Motor neuron (in vitro differentiated cells): ENCODE measurements at regions of chr1 and their contacts with region 1.

Region 1: DNA sequence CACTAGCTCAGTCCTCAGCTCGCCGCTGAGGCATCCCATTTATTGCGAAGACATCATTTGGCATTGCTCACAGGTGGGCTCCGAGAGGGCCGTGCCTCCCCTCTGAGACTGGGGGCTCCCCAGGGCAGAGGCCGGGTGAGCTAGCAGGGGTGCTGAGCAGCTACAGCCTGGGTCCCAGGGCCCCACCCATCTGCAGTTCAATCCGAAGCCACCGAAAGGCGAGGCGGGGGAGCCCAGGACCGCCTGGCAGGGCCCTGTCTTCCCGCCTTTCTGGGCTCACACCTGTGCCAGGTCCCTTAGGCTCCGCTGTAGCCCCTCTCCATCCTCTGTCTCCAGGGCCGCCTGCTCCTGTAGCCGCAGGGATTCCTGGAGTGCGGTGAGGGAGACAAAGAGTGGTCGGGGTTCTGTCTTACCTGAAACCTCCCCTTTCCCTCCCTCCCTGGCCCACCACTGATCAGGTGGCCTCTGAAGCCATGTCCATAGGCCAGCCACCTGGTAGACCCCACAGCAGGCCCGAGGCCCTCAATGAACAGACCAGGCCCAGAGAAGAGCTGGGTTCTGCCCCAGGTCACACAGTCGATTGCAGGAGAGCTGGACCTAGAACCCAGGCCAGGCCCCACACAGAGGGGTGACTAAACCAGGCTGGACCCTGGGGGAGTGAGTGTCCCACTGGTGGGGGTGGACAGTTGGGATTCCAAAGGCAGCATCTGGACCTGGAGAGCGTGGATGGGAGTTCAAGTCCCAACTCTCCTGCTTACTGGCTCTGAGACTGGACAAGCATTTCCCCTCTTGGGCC is 18.1 kb upstream of the NBPF1 start:
- ATAC-seq: peak in 3 of 8 experiments; percentile 8 to 12 (median 10)
- H3K4me3 ChIP-seq: no peak overlapping the region
- H3K27ac ChIP-seq: peak overlapping the region; percentile 1
- H3K4me1 ChIP-seq: no peaks in the 10 kb centered on the region

Region 2: DNA sequence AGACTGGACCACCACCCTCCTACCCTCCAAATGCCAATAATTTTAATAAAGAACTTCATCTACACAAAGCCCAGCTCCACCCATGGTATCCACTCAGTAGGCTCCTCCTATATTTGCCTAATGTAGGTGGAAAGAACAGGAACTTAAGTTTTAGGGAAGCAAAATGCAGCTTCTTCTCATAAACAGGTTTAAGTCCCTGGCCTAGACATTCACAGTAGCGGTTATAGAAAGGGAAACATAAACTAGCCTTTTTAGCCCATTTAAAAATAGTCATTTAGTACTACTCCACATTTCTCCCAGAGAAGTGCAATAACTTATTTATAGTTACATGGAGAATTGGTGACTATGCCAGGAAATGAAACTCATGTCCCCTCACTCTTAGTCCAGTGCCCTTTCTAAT is 337.9 kb before region 1 on chr1:
- in situ Hi-C with region 1: no loop called
- ATAC-seq: peak in 3 of 8 experiments; percentile 71 to 94 (median 87)
- H3K4me3 ChIP-seq: no peak overlapping the region
- H3K27ac ChIP-seq: no peak overlapping the region
- H3K4me1 ChIP-seq: peaks cover 0 to 5% of the 10 kb centered on the region in 2 donors

Region 3: GRCh38 chr1:16351994-16352841 is 279.2 kb before region 1 on chr1 and contains the start of gene FBXO42:
- in situ Hi-C with region 1: no loop called
- ATAC-seq: peak; percentile 88 to 95 (median 92)
- H3K4me3 ChIP-seq: peak within 1 kb of the TSS; percentile 72 to 96 (median 87)
- H3K27ac ChIP-seq: peak within 1 kb of the TSS; percentile 91 to 95
- H3K4me1 ChIP-seq: peaks cover 21% of the 10 kb centered on the region in 2 donors
- total RNA-seq, gene FBXO42: 10.0 to 27.6 (median 23.2) TPM

Region 4: GRCh38 chr1:16418823-16419425 is 212.5 kb before region 1 on chr1:
- in situ Hi-C with region 1: no loop called
- ATAC-seq: no peak
- H3K4me3 ChIP-seq: no peak overlapping the region
- H3K27ac ChIP-seq: no peak overlapping the region
- H3K4me1 ChIP-seq: peaks cover 9 to 10% of the 10 kb centered on the region in 2 donors

Region 5: GRCh38 chr1:16727190-16728111 is 96.0 kb after region 1 on chr1:
- in situ Hi-C with region 1: loop called in 1 of 9 experiments (anchors 10 kb)
- ATAC-seq: peak in 7 of 8 experiments; percentile 36 to 98 (median 65)
- H3K4me3 ChIP-seq: no peak overlapping the region
- H3K27ac ChIP-seq: no peak overlapping the region
- H3K4me1 ChIP-seq: peaks cover 0 to 2% of the 10 kb centered on the region in 2 donors